ENCODE measurements at regions of chr1 and their contacts with region 1.

Region 1: GRCh38 chr1:205183676-205184335 is 27.7 kb downstream of the DSTYK start:
- DNase-seq: peak; percentile 28
- ATAC-seq: no peak
- H3K4me3 Mint-ChIP-seq: no peak overlapping the region
- H3K27ac Mint-ChIP-seq: peak overlapping the region; percentile 79
- H3K4me1 Mint-ChIP-seq: peaks cover 59% of the 10 kb centered on the region
- H3K27me3 Mint-ChIP-seq: no peaks in the 10 kb centered on the region
- CTCF ChIP-seq: no peak

Region 2: GRCh38 chr1:204791453-204792353 is 392.1 kb before region 1 on chr1:
- CTCF ChIA-PET with region 1: no interaction called
- POLR2A ChIA-PET with region 1: no interaction called
- intact Hi-C with region 1: no loop called
- DNase-seq: peak; percentile 93
- ATAC-seq: peak; percentile 94
- H3K4me3 Mint-ChIP-seq: no peak overlapping the region
- H3K27ac Mint-ChIP-seq: no peak overlapping the region
- H3K4me1 Mint-ChIP-seq: peaks cover 2% of the 10 kb centered on the region
- H3K27me3 Mint-ChIP-seq: peaks cover 28% of the 10 kb centered on the region
- CTCF ChIP-seq: peak; percentile 91

Region 3: DNA sequence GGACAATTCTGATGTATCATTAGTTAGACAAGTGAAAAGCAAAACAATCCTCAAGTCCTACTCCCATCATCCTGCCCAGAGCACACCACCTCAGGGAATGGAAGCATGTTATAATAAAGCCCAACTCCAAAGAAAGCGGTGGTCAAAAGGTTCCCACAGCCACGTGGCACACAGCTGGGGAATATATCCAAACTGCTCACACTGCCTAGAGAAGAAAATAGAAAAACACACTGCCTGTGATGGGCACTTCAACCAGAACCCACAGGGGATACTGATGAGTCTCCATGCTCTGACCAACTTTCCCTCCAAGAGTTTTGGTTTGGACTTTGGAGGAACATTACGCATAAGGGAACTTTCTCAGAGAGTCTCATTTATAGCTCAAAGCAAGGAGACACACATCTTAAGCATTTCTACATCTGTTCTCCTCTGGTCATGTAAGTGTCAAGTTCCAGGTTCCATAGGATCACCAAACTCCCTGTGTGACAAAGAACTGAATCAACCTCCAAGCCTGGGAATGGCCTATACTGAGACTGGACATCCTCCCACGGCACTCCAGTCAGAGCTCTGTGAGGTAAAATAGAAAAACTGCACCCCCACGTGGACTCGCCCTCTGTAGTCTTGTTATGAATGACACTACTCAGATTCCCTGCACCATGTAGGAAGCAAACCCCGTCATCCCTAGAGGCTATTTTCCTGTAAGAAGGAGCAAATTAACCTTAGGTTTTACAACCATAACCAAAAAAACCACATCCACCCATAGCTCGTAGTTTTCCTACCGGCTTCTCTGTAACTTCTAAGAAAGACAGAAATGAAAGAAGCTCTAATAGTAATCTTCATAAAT is 15.5 kb after region 1 on chr1:
- CTCF ChIA-PET with region 1: interaction called, 12 read pairs
- POLR2A ChIA-PET with region 1: interaction called, 36 read pairs
- intact Hi-C with region 1: loop called (anchors 2 kb)
- DNase-seq: peak; percentile 70
- ATAC-seq: peak; percentile 55
- H3K4me3 Mint-ChIP-seq: peak overlapping the region; percentile 53
- H3K27ac Mint-ChIP-seq: peak overlapping the region; percentile 94
- H3K4me1 Mint-ChIP-seq: peaks cover 69% of the 10 kb centered on the region
- H3K27me3 Mint-ChIP-seq: no peaks in the 10 kb centered on the region
- CTCF ChIP-seq: no peak

Region 4: GRCh38 chr1:205204552-205204951 is 20.7 kb after region 1 on chr1:
- CTCF ChIA-PET with region 1: interaction called, 12 read pairs
- POLR2A ChIA-PET with region 1: interaction called, 36 read pairs
- intact Hi-C with region 1: loop called (anchors 2 kb)
- DNase-seq: no peak
- ATAC-seq: no peak
- H3K4me3 Mint-ChIP-seq: peak overlapping the region; percentile 18
- H3K27ac Mint-ChIP-seq: peak overlapping the region; percentile 98
- H3K4me1 Mint-ChIP-seq: peaks cover 73% of the 10 kb centered on the region
- H3K27me3 Mint-ChIP-seq: no peaks in the 10 kb centered on the region
- CTCF ChIP-seq: no peak